Endothelial cell of umbilical vein (primary cell): ENCODE measurements at regions of chr20 and their contacts with region 1.

Region 1: GRCh38 chr20:51372176-51372803 is 170.2 kb downstream of the NFATC2 start:
- DNase-seq: peak; percentile 73
- H3K4me3 ChIP-seq: no peak overlapping the region
- H3K27ac ChIP-seq: no peak overlapping the region
- H3K4me1 ChIP-seq: peaks cover 26% of the 10 kb centered on the region
- H3K27me3 ChIP-seq: no peaks in the 10 kb centered on the region
- CTCF ChIP-seq: peak; percentile 84 to 93
- POLR2A ChIP-seq: no peak

Region 2: GRCh38 chr20:51244486-51244885 is 127.8 kb before region 1 on chr20:
- CTCF ChIA-PET with region 1: no interaction called
- POLR2A ChIA-PET with region 1: no interaction called
- dilution Hi-C with region 1: no loop called
- intact Hi-C with region 1: no loop called
- DNase-seq: no peak
- H3K4me3 ChIP-seq: no peak overlapping the region
- H3K27ac ChIP-seq: no peak overlapping the region
- H3K4me1 ChIP-seq: no peaks in the 10 kb centered on the region
- H3K27me3 ChIP-seq: peaks cover 1 to 5% of the 10 kb centered on the region in 2 experiments
- CTCF ChIP-seq: no peak
- POLR2A ChIP-seq: no peak

Region 3: GRCh38 chr20:51259466-51259865 is 112.8 kb before region 1 on chr20:
- CTCF ChIA-PET with region 1: no interaction called
- POLR2A ChIA-PET with region 1: no interaction called
- dilution Hi-C with region 1: no loop called
- intact Hi-C with region 1: no loop called
- DNase-seq: no peak
- H3K4me3 ChIP-seq: no peak overlapping the region
- H3K27ac ChIP-seq: no peak overlapping the region
- H3K4me1 ChIP-seq: no peaks in the 10 kb centered on the region
- H3K27me3 ChIP-seq: peaks cover 10 to 14% of the 10 kb centered on the region in 2 experiments
- CTCF ChIP-seq: no peak
- POLR2A ChIP-seq: no peak

Region 4: DNA sequence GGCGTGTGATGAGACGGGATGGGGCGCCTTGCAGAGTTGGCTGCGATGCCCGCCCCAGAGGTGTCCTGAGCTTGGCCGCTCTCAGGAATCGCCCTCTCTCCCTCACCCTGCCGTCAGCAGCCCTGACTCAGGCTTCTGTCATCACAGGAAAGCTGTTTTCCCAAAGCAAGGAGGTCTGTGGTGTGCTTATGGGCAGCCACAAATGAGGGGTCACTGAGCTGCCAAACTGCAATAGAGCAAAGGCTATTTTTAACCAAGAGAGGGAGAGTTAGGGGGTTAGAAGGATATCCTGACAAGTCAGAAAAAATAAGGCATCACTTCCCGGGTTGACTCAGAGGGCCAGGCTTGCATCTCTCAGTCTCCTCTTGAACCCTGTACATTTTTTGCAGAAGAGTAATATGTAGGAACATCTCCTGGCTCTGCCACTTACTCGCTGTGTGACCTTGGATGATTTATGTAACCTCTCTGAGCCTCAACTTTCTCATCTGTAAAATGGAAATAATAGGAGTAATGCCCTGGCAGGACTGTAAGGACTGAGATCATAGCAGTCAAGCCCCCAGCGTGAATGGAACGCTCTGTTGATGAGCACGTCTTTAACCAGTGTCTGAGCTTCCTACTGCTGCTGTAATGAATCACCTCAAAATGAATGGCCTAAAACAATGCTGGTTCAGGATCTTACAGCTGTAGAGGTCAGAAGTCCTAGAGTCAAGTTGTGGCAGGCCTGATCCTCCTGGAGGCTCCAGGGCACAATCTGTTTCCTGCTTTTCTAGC is 11.7 kb before region 1 on chr20:
- CTCF ChIA-PET with region 1: interaction called, 5 read pairs
- POLR2A ChIA-PET with region 1: no interaction called
- dilution Hi-C with region 1: no loop called
- intact Hi-C with region 1: loop called (anchors 1 kb)
- DNase-seq: peak; percentile 98
- H3K4me3 ChIP-seq: no peak overlapping the region
- H3K27ac ChIP-seq: peak overlapping the region; percentile 85
- H3K4me1 ChIP-seq: peaks cover 33% of the 10 kb centered on the region
- H3K27me3 ChIP-seq: no peaks in the 10 kb centered on the region
- CTCF ChIP-seq: no peak
- POLR2A ChIP-seq: no peak

Region 5: DNA sequence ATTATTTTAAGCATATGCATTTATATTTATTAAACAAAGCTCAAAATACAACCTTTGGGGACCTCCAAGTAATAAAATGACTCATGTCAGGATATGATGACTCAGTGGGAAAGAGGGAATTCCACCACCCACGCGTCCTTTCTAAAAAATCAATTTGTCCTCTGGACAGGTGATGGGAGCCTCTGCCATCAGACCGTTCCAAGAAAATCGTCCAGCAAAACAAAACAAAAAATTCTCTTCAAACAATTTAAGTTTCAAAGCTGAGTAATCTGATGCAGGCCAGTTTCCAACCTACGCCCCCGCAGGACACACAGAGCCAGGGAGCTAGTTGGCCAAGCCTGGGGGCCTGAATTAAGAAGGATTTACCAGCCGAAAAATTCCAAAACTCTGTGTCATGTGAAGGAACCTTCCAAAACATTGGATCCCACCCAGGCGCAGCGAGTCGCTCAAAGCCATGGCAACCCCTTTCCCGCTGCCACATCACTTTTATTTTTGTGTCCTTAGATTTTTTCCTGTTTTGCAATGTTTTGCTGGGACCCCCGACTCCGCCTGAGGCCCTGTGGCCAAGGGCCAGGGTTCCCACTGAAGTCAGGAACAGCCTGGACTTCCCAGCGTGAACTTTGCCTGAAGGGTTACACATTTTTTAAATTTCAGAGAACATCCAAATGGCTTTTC is 74.9 kb after region 1 on chr20:
- CTCF ChIA-PET with region 1: no interaction called
- POLR2A ChIA-PET with region 1: interaction called, 3 read pairs
- dilution Hi-C with region 1: no loop called
- intact Hi-C with region 1: loop called (anchors 1 kb)
- DNase-seq: peak; percentile 95
- H3K4me3 ChIP-seq: peak overlapping the region in 1 of 3 experiments; percentile 3
- H3K27ac ChIP-seq: peak overlapping the region; percentile 83
- H3K4me1 ChIP-seq: peaks cover 20% of the 10 kb centered on the region
- H3K27me3 ChIP-seq: no peaks in the 10 kb centered on the region
- CTCF ChIP-seq: no peak
- POLR2A ChIP-seq: no peak

Region 6: GRCh38 chr20:51562332-51563155 is 190.3 kb after region 1 on chr20:
- CTCF ChIA-PET with region 1: interaction called, 4 read pairs
- POLR2A ChIA-PET with region 1: no interaction called
- dilution Hi-C with region 1: no loop called
- intact Hi-C with region 1: loop called (anchors 1 kb)
- DNase-seq: peak; percentile 98
- H3K4me3 ChIP-seq: peak overlapping the region; percentile 40 to 62 (median 54)
- H3K27ac ChIP-seq: peak overlapping the region; percentile 64
- H3K4me1 ChIP-seq: peaks cover 24% of the 10 kb centered on the region
- H3K27me3 ChIP-seq: peaks cover 1 to 2% of the 10 kb centered on the region in 2 experiments
- CTCF ChIP-seq: peak; percentile 12
- POLR2A ChIP-seq: no peak

Region 7: DNA sequence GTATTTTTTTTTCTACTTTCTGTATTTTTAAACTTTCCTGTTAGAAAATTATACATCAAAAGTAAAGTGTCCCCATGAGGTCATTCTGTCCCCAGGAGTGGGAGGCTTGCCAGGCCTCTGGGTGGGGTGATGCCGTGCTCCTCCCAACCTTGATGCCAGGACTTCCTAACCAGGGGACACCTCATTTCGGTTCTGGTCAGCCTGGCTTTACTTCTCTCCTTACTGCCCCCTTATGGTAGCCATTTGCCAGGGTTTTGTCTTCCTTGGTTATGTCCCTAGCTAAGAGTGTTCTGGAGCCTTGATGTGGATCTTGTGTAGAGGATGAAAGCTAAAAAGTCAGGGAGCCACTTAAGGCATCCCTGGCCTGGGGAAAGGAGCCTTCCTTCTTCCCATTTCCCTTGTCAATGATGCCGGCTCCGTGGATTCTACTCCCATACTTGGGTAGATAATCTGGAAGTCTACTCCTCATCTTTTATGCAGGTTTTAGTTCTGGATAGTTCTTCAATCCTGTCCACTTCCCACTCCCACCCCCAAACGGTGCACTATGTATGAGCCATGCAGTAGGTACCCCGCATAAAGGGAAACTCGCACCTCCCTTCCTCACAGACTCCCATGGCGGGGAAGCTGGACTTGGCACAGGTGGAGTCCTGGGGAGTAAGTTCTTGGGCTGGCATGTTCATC is 594.1 kb after region 1 on chr20:
- CTCF ChIA-PET with region 1: interaction called, 6 read pairs
- POLR2A ChIA-PET with region 1: no interaction called
- dilution Hi-C with region 1: no loop called
- intact Hi-C with region 1: loop called (anchors 10 kb)
- DNase-seq: peak; percentile 77
- H3K4me3 ChIP-seq: no peak overlapping the region
- H3K27ac ChIP-seq: no peak overlapping the region
- H3K4me1 ChIP-seq: no peaks in the 10 kb centered on the region
- H3K27me3 ChIP-seq: no peaks in the 10 kb centered on the region
- CTCF ChIP-seq: peak; percentile 73 to 74
- POLR2A ChIP-seq: no peak

Region 8: GRCh38 chr20:52150440-52151258 is 778.4 kb after region 1 on chr20:
- CTCF ChIA-PET with region 1: no interaction called
- POLR2A ChIA-PET with region 1: no interaction called
- dilution Hi-C with region 1: no loop called
- intact Hi-C with region 1: loop called (anchors 2 kb)
- DNase-seq: peak; percentile 72
- H3K4me3 ChIP-seq: no peak overlapping the region
- H3K27ac ChIP-seq: no peak overlapping the region
- H3K4me1 ChIP-seq: no peaks in the 10 kb centered on the region
- H3K27me3 ChIP-seq: no peaks in the 10 kb centered on the region
- CTCF ChIP-seq: peak; percentile 61 to 73
- POLR2A ChIP-seq: no peak